ENCODE measurements at regions of chr9 and their contacts with region 1.

Region 1: GRCh38 chr9:36407122-36407723 is 7.2 kb upstream of the RNF38 start:
- DNase-seq: peak; percentile 61
- H3K4me3 Mint-ChIP-seq: no peak overlapping the region
- H3K27ac Mint-ChIP-seq: no peak overlapping the region
- H3K4me1 Mint-ChIP-seq: peaks cover 8% of the 10 kb centered on the region
- H3K27me3 Mint-ChIP-seq: no peaks in the 10 kb centered on the region
- CTCF ChIP-seq: peak; percentile 82

Region 2: DNA sequence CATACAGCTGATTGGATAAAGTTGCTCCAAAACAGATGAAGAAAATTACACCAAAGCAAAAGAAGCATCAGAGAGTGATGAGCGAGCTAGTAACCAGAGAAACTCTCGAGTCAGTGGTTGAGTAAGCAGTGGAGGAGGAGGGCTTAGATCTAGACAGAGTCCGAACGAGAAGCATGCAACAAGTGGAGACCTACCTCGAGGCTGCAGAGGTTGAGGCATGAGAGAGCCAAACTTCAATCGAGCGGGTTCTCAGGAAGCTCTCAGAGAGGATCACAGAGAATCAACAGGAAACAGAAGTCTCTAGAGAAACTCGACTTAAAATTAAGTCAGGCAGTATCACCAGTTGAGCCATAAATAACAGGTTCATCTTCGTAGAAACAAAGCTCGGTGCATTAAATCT is 911.2 kb before region 1 on chr9:
- CTCF ChIA-PET with region 1: no interaction called
- POLR2A ChIA-PET with region 1: no interaction called
- intact Hi-C with region 1: no loop called
- DNase-seq: no peak
- H3K4me3 Mint-ChIP-seq: no peak overlapping the region
- H3K27ac Mint-ChIP-seq: no peak overlapping the region
- H3K4me1 Mint-ChIP-seq: peaks cover 13% of the 10 kb centered on the region
- H3K27me3 Mint-ChIP-seq: no peaks in the 10 kb centered on the region
- CTCF ChIP-seq: no peak

Region 3: DNA sequence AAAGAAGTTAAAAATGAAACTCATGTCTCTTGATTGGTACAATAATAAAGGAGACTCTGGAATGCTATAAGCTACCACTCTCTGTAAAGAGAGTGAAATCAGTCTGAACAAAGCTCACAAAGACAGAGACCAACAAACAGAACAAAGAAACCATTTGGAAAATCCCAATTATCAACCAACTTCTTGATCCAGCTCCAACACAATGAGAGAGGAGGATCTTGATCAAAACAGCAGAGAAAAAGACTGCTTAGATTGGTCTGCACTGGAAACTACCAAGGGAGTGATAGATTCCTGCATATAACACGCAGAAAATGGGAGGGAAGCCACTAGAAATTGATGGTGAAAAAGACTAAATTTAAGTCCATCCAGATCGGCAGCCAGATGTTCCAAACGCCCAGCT is 16.0 kb after region 1 on chr9:
- CTCF ChIA-PET with region 1: interaction called, 45 read pairs
- POLR2A ChIA-PET with region 1: interaction called, 8 read pairs
- intact Hi-C with region 1: no loop called
- DNase-seq: no peak
- H3K4me3 Mint-ChIP-seq: no peak overlapping the region
- H3K27ac Mint-ChIP-seq: no peak overlapping the region
- H3K4me1 Mint-ChIP-seq: peaks cover 28% of the 10 kb centered on the region
- H3K27me3 Mint-ChIP-seq: no peaks in the 10 kb centered on the region
- CTCF ChIP-seq: no peak

Region 4: DNA sequence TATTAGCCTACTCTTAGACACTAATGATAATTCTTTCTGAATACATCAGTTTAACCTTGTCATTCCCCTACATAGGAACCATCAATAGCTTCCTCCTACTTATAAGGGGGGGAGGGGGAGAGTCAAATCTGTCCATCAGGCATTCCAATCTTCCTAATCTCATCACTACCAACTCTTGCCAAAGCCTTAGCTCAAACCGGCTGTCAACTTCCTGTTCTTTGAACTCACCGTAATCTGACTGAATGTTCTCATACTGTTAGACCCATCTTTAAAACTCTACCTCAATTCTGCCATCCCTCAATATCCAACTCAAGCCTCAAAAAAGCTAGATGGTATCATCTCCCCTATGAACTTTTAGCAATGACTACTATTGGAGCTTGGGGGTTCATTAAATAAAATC is 34.7 kb after region 1 on chr9:
- CTCF ChIA-PET with region 1: interaction called, 253 read pairs
- POLR2A ChIA-PET with region 1: interaction called, 3 read pairs
- intact Hi-C with region 1: no loop called
- DNase-seq: no peak
- H3K4me3 Mint-ChIP-seq: no peak overlapping the region
- H3K27ac Mint-ChIP-seq: no peak overlapping the region
- H3K4me1 Mint-ChIP-seq: peaks cover 12% of the 10 kb centered on the region
- H3K27me3 Mint-ChIP-seq: no peaks in the 10 kb centered on the region
- CTCF ChIP-seq: no peak

Region 5: DNA sequence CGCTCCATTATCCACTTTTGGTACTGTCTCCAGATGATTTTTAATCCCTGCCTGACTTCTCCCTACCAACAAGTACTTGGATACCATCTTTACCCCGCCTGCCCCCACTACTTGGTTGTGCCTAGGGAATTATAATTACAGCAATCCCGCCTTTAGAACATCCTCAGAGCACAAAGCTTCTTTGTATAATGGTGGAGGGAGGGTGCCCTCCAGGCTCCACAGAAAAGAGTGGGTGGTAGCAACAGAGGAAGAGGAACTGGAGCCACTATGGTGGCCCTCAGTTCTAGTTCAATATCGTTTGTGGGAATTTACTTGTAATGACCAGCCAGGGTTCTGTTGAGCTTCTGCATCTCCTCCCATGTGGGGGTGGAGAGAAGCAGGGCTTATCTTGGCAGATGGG is 71.9 kb after region 1 on chr9:
- CTCF ChIA-PET with region 1: interaction called, 15 read pairs
- POLR2A ChIA-PET with region 1: no interaction called
- intact Hi-C with region 1: no loop called
- DNase-seq: no peak
- H3K4me3 Mint-ChIP-seq: no peak overlapping the region
- H3K27ac Mint-ChIP-seq: no peak overlapping the region
- H3K4me1 Mint-ChIP-seq: peaks cover 6% of the 10 kb centered on the region
- H3K27me3 Mint-ChIP-seq: no peaks in the 10 kb centered on the region
- CTCF ChIP-seq: no peak

Region 6: GRCh38 chr9:36551129-36551528 is 143.9 kb after region 1 on chr9:
- CTCF ChIA-PET with region 1: interaction called, 151 read pairs
- POLR2A ChIA-PET with region 1: interaction called, 7 read pairs
- intact Hi-C with region 1: loop called (anchors 1 kb)
- DNase-seq: no peak
- H3K4me3 Mint-ChIP-seq: no peak overlapping the region
- H3K27ac Mint-ChIP-seq: no peak overlapping the region
- H3K4me1 Mint-ChIP-seq: peaks cover 5% of the 10 kb centered on the region
- H3K27me3 Mint-ChIP-seq: peaks cover 24% of the 10 kb centered on the region
- CTCF ChIP-seq: no peak

Region 7: DNA sequence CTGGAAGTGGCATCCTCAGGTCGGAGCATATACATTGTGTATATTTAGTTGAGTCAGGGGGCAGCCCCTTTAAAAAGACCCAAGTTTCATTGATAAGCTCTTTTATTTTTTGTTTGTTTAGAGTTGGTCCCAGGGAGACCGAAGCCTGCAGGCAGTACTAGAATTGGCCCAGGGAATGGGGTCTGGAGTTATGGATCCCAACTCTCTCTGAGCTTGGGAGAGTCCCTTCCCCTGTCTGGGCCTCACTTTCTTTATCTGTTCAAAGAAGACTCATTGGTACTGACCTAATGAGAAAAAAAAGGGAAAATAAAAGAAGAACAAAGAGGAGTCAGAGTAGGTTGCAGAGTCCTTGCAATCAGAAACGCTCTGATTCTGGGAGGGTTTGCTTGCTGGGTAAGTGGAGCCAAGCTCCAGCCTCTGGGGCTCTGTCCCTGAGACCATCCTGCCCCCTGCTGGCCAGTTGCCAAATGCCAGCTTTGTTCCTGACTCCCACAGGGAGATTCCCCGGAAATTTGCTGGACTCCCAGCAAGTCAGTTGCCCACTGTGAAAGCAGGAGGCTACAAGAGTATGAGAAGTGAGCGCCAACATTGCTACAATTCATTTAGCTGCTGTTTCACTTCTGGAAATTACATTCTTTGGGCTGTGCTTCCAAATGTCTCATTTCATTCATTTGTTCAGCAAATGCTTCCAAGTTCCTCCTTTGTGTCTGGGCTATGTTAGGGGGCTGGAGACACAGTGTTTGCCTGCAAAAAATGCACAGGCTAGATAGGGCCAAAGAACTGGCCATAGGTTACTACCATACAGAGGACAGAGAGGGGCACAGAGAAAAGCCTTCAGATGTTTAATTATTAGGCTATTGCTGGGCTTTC is 321.7 kb after region 1 on chr9:
- CTCF ChIA-PET with region 1: interaction called, 4 read pairs
- POLR2A ChIA-PET with region 1: no interaction called
- intact Hi-C with region 1: loop called (anchors 1 kb)
- DNase-seq: peak; percentile 73
- H3K4me3 Mint-ChIP-seq: no peak overlapping the region
- H3K27ac Mint-ChIP-seq: no peak overlapping the region
- H3K4me1 Mint-ChIP-seq: no peaks in the 10 kb centered on the region
- H3K27me3 Mint-ChIP-seq: peaks cover 9% of the 10 kb centered on the region
- CTCF ChIP-seq: peak; percentile 71

Region 8: GRCh38 chr9:37027582-37028419 is 620.6 kb after region 1 on chr9:
- CTCF ChIA-PET with region 1: no interaction called
- POLR2A ChIA-PET with region 1: no interaction called
- intact Hi-C with region 1: no loop called
- DNase-seq: peak; percentile 96
- H3K4me3 Mint-ChIP-seq: peak overlapping the region; percentile 78
- H3K27ac Mint-ChIP-seq: no peak overlapping the region
- H3K4me1 Mint-ChIP-seq: peaks cover 10% of the 10 kb centered on the region
- H3K27me3 Mint-ChIP-seq: peaks cover 55% of the 10 kb centered on the region
- CTCF ChIP-seq: no peak